ENCODE measurements at regions of chr13 and their contacts with region 1.

Region 1: GRCh38 chr13:94268661-94269060 is 210.8 kb downstream of the DCT start:
- DNase-seq: peak; percentile 11
- ATAC-seq: peak; percentile 39; the same call in 1 of the 2 replicates
- H3K4me3 ChIP-seq: no peak overlapping the region
- H3K27ac ChIP-seq: no peak overlapping the region
- H3K4me1 ChIP-seq: peaks cover 7% of the 10 kb centered on the region
- H3K27me3 ChIP-seq: no peaks in the 10 kb centered on the region
- CTCF ChIP-seq: no peak

Region 2: DNA sequence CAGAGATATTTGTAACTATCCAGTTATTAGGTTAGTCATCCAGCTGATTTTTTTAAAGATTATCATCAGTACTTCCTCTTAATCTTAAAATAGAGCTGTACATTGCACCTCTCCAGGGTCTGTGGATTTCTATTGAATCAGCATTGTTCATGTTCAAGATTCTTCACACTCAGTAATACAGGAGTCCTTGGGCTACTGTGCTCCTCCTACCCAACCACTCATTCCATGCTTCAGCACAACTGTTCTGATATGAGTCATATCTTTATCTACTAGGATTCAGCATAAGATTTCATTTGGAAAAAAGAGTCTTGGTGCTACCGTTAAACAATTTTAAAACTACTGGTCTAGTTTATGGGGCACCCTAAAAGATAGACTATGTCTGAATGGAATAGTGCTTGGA is 147.0 kb before region 1 on chr13:
- CTCF ChIA-PET with region 1: interaction called, 10 read pairs
- POLR2A ChIA-PET with region 1: no interaction called
- intact Hi-C with region 1: no loop called
- DNase-seq: peak; percentile 32
- ATAC-seq: peak; percentile 83
- H3K4me3 ChIP-seq: no peak overlapping the region
- H3K27ac ChIP-seq: no peak overlapping the region
- H3K4me1 ChIP-seq: peaks cover 9% of the 10 kb centered on the region
- H3K27me3 ChIP-seq: no peaks in the 10 kb centered on the region
- CTCF ChIP-seq: no peak

Region 3: DNA sequence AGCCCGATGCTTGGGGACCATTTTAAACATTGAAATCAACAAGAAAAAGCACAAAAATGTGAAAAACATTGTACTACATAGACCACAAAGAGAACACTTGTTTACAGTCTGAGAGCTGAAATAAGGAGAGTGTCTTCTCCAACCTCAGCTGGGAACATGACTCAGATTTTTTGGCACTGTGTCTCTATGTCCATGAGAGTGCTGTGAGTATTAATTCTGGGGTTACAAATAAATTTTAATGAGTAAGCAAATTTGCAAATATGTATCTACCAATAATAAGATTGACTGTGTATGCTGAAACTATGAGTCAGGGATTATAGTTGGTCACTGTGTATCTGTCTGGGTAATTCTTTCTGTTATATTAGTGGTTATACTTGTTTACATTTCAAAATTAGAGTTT is 36.8 kb after region 1 on chr13:
- CTCF ChIA-PET with region 1: no interaction called
- POLR2A ChIA-PET with region 1: no interaction called
- intact Hi-C with region 1: loop called (anchors 1 kb)
- DNase-seq: peak; percentile 93
- ATAC-seq: peak; percentile 84
- H3K4me3 ChIP-seq: peak overlapping the region; percentile 53; the same call in 1 of the 2 replicates
- H3K27ac ChIP-seq: peak overlapping the region; percentile 97
- H3K4me1 ChIP-seq: peaks cover 43% of the 10 kb centered on the region
- H3K27me3 ChIP-seq: no peaks in the 10 kb centered on the region
- CTCF ChIP-seq: no peak

Region 4: GRCh38 chr13:94345374-94346195 is 76.9 kb after region 1 on chr13:
- CTCF ChIA-PET with region 1: no interaction called
- POLR2A ChIA-PET with region 1: no interaction called
- intact Hi-C with region 1: loop called (anchors 5 kb)
- DNase-seq: peak; percentile 19
- ATAC-seq: peak; percentile 56
- H3K4me3 ChIP-seq: no peak overlapping the region
- H3K27ac ChIP-seq: no peak overlapping the region
- H3K4me1 ChIP-seq: 0 out of 2 replicates have a peak, but pooled peaks cover 4% of the 10 kb centered on the region
- H3K27me3 ChIP-seq: no peaks in the 10 kb centered on the region
- CTCF ChIP-seq: peak; percentile 37; the same call in 1 of the 2 replicates